Left ventricle myocardium inferior (tissue), 1 donor: ENCODE measurements at regions of chr13 and their contacts with region 1.

Region 1: DNA sequence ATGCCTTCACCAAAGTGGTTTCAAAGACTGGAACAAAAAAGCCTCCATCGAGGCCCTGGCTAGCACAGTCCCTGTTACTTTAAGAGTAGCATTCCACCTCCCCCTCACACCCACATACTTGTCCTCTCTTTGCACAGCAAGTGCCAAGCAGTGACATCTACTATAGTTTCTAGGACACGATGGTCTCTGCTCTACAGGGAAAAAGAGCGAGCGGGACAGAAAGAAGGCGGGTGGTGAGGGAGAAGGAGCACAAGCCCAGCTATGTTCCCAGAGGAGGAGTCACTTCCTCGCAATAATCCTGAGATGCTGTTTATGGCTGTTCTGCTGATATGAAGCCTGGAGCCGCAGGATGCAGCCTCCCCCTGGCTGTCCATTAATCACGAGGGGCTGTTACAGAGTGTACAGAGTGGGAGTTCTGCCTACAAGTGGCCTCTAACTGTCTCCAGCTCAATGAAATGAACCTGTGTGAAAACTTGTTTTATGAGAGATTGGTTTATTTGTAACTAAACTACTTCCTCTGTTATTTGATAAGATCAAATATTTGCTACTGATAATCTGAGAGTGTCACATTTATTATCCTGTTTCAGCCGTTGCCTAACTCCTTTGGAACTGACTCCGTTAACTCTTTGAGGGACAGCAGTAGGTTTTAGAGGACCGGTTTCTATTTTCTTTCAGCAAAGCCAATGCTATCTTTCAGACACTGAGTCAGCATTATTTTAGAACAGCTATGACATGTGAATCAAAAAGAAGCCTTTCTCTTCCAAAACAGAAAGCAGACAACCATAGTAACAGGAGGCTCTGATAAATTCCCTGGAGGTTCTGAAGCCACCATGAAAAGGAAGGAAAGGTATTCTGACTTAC is 208.0 kb downstream of the SPRY2 start:
- DNase-seq: peak; percentile 47
- H3K4me3 ChIP-seq: peak overlapping the region; percentile 58
- H3K27ac ChIP-seq: peak overlapping the region; percentile 93
- H3K4me1 ChIP-seq: peaks cover 42% of the 10 kb centered on the region
- H3K27me3 ChIP-seq: no peaks in the 10 kb centered on the region
- CTCF ChIP-seq: no peak

Region 2: DNA sequence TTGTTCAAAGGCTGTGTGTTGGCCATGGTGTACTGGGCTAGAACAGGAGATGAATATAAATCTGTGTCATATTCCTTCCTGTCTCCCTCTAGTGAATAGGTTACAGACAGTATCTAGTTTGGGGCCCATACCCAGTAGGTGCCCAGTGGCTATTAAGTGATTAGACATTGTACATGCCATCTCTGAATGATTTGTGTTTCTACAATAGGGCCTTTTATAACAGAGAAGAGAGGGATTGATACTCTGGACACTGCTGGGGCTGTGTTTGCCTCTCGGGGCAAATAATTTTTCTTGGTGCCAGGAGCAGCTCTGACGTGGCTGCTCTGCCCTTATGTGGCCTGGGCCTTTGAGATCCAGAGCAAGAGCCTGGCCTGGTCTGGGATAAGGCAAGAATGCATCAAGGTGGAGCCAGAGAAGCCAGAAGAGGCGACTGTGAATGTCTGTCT is 195.2 kb before region 1 on chr13:
- intact Hi-C with region 1: no loop called
- DNase-seq: no peak
- H3K4me3 ChIP-seq: no peak overlapping the region
- H3K27ac ChIP-seq: peak overlapping the region; percentile 66
- H3K4me1 ChIP-seq: no peaks in the 10 kb centered on the region
- H3K27me3 ChIP-seq: no peaks in the 10 kb centered on the region
- CTCF ChIP-seq: no peak

Region 3: DNA sequence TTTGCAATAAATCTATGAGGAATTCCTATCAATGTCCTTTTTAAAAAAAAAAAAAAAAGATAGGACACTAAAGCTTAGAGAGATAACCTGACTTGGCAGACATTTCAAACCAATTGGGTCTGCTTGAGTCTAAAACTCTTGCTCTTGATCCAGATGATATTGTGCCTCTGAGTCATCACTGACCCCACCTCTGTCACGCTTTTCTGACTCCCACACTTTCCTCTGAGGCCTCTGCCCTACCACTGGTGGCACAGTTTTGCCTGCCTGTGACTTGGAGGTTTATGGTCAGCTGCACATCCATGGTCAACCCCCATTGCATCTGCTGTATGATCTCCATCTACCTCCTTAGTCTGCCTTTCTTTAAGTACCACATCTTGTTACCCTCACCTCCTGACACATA is 120.7 kb before region 1 on chr13:
- intact Hi-C with region 1: no loop called
- DNase-seq: no peak
- H3K4me3 ChIP-seq: no peak overlapping the region
- H3K27ac ChIP-seq: no peak overlapping the region
- H3K4me1 ChIP-seq: peaks cover 18% of the 10 kb centered on the region
- H3K27me3 ChIP-seq: no peaks in the 10 kb centered on the region
- CTCF ChIP-seq: no peak

Region 4: GRCh38 chr13:80180740-80181355 is 47.9 kb after region 1 on chr13:
- intact Hi-C with region 1: no loop called
- DNase-seq: no peak
- H3K4me3 ChIP-seq: no peak overlapping the region
- H3K27ac ChIP-seq: no peak overlapping the region
- H3K4me1 ChIP-seq: no peaks in the 10 kb centered on the region
- H3K27me3 ChIP-seq: no peaks in the 10 kb centered on the region
- CTCF ChIP-seq: no peak

Region 5: GRCh38 chr13:80338781-80339562 is 206.0 kb after region 1 on chr13:
- intact Hi-C with region 1: loop called (anchors 10 kb)
- DNase-seq: peak; percentile 76
- H3K4me3 ChIP-seq: peak overlapping the region; percentile 97
- H3K27ac ChIP-seq: peak overlapping the region; percentile 96
- H3K4me1 ChIP-seq: peaks cover 86% of the 10 kb centered on the region
- H3K27me3 ChIP-seq: no peaks in the 10 kb centered on the region
- CTCF ChIP-seq: peak; percentile 40